ENCODE measurements at regions of chr2 and their contacts with region 1.

Region 1: GRCh38 chr2:104521247-104521646 is 332.7 kb upstream of the POU3F3 start:
- DNase-seq: no peak
- H3K4me3 ChIP-seq: no peak overlapping the region
- H3K4me3 Mint-ChIP-seq: no peak overlapping the region
- H3K27ac Mint-ChIP-seq: no peak overlapping the region
- H3K4me1 ChIP-seq: no peaks in the 10 kb centered on the region
- H3K4me1 Mint-ChIP-seq: no peaks in the 10 kb centered on the region
- H3K27me3 ChIP-seq: no peaks in the 10 kb centered on the region
- H3K27me3 Mint-ChIP-seq: peaks cover 9% of the 10 kb centered on the region
- CTCF ChIP-seq: no peak

Region 2: DNA sequence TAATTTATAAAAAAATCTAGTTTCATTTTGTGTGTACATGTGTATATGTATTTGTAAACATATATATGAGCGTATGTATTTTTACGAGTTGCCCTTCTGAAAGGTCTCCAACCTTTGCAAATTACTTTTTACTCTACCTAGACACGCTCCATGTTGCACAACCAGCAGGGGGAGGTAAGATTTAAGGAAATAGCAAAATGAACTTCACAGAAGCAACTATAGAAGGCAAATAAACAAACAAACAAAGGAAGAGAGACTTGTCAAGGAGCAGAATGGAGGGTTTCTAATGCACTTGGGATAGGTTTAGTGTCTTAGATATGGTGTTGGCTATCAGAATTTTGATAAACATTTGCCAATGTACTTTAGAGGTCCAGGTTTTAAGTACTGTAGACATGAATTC is 487.8 kb before region 1 on chr2:
- CTCF ChIA-PET with region 1: no interaction called
- POLR2A ChIA-PET with region 1: no interaction called
- intact Hi-C with region 1: loop called (anchors 5 kb)
- DNase-seq: peak in 1 of 2 experiments; percentile 22
- H3K4me3 ChIP-seq: no peak overlapping the region
- H3K4me3 Mint-ChIP-seq: no peak overlapping the region
- H3K27ac Mint-ChIP-seq: no peak overlapping the region
- H3K4me1 ChIP-seq: no peaks in the 10 kb centered on the region
- H3K4me1 Mint-ChIP-seq: no peaks in the 10 kb centered on the region
- H3K27me3 ChIP-seq: no peaks in the 10 kb centered on the region
- H3K27me3 Mint-ChIP-seq: peaks cover 5% of the 10 kb centered on the region
- CTCF ChIP-seq: peak; percentile 24 to 47

Measured in Caco-2 (cell line).